Left ventricle myocardium inferior (tissue), 1 donor: ENCODE measurements at regions of chr1 and their contacts with region 1.

Region 1: DNA sequence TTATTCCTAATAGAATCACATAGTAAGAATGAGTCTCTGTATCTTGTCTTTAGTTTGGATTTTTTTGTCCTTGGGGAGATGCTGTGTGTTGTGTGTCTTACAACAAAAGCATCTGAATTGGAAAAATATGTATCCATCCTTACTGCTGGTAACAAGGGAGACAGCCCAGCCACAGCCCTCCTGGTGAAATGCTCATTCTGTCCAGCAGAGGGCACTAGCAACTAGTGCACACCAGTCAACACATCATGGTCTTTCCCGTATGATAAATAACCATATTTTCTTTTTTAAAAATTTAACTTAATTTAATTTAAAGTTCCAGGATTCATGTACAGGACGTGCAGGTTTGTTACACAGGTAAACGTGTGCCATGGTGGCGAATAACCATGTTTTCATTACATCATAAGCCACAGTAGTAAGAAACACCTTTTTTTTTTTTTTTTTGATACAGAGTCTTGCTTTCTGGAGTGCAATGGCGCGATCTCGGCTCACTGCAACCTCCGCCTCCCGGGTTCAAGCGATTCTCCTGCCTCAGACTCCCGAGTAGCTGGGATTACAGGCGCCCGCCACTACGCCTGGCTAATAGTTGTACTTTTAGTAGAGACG is 245.1 kb downstream of the PTBP2 start:
- DNase-seq: peak; percentile 69
- H3K4me3 ChIP-seq: no peak overlapping the region
- H3K27ac ChIP-seq: no peak overlapping the region
- H3K4me1 ChIP-seq: no peaks in the 10 kb centered on the region
- H3K27me3 ChIP-seq: peaks cover 50% of the 10 kb centered on the region
- CTCF ChIP-seq: peak; percentile 96

Region 2: GRCh38 chr1:96164053-96164906 is 802.4 kb before region 1 on chr1:
- intact Hi-C with region 1: no loop called
- DNase-seq: no peak
- H3K4me3 ChIP-seq: no peak overlapping the region
- H3K27ac ChIP-seq: no peak overlapping the region
- H3K4me1 ChIP-seq: no peaks in the 10 kb centered on the region
- H3K27me3 ChIP-seq: no peaks in the 10 kb centered on the region
- CTCF ChIP-seq: no peak

Region 3: GRCh38 chr1:96901783-96902363 is 64.8 kb before region 1 on chr1:
- intact Hi-C with region 1: no loop called
- DNase-seq: no peak
- H3K4me3 ChIP-seq: no peak overlapping the region
- H3K27ac ChIP-seq: no peak overlapping the region
- H3K4me1 ChIP-seq: no peaks in the 10 kb centered on the region
- H3K27me3 ChIP-seq: no peaks in the 10 kb centered on the region
- CTCF ChIP-seq: no peak

Region 4: DNA sequence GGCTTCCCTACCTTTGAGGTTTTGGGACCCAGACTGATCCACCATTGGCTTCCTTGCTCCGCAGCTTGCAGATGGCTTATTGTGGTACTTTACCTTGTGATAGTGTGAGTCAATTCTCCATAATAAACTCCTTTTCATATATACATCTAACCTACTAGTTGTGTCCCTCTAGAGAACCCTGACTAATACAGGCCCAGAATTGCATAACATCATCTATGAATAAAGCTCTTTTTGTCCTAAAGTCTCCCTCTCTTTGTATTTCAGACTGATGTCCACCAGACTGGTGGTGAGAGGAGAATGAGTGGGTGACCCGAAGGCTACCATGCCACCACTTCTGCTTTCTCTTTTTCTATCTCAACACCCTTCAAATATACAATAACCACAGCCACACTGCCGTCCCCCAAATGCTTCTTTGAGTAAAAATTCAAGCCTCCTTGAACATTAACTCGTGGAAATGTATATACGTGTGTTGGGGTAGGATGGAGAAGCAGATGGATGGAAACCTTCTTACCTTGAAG is 20.6 kb after region 1 on chr1:
- intact Hi-C with region 1: no loop called
- DNase-seq: no peak
- H3K4me3 ChIP-seq: no peak overlapping the region
- H3K27ac ChIP-seq: no peak overlapping the region
- H3K4me1 ChIP-seq: no peaks in the 10 kb centered on the region
- H3K27me3 ChIP-seq: no peaks in the 10 kb centered on the region
- CTCF ChIP-seq: no peak

Region 5: DNA sequence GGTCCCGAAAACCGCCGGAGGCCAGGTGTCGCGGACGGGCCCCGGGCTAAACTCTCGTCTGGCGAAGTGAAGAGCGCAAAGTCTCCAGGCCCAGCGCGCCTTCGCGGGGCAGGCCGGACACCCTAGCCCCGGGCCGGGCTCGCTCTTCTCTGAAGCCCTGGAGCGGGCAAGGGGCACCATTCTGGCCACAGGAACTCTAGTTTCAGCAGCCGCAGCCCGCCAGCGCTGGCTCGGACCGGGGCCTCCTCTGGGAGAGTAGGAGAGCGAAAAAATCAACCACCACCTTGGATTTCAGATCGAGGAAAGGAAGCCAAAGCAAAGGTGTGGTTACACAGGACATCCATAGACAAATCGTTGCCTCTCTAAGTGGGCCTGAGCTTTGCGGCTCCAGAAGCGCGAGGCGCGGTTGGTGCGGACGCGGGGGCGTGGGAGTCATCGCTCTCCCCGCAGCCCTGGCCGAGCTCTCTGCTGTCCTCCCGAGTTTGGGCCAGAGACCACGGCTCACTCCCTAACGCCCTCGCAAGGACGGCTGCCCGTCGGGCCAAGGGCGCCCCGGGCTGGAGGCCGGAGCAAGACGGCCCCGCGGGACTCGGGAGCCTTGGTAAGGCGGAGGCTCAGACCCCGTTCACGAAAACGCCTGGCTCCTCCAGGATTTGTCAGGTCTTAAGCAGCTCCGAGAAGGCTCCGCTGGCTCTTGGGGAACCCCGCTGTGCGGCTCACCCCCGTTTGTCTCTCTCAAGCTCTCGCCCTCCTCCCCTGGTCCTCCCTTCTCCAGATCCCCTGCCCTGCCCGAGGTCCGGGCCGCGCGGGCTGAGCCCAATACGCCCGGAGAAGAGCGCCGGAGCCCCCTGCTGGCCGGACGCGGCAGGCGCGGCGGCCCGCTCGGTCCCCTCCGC is 1087.1 kb after region 1 on chr1:
- intact Hi-C with region 1: loop called (anchors 5 kb)
- DNase-seq: peak; percentile 55
- H3K4me3 ChIP-seq: peak overlapping the region; percentile 69
- H3K27ac ChIP-seq: no peak overlapping the region
- H3K4me1 ChIP-seq: peaks cover 24% of the 10 kb centered on the region
- H3K27me3 ChIP-seq: peaks cover 97% of the 10 kb centered on the region
- CTCF ChIP-seq: peak; percentile 92